Naive thymus-derived CD8-positive, alpha-beta T cell (primary cell): ENCODE measurements at regions of chr11 and their contacts with region 1.

Region 1: DNA sequence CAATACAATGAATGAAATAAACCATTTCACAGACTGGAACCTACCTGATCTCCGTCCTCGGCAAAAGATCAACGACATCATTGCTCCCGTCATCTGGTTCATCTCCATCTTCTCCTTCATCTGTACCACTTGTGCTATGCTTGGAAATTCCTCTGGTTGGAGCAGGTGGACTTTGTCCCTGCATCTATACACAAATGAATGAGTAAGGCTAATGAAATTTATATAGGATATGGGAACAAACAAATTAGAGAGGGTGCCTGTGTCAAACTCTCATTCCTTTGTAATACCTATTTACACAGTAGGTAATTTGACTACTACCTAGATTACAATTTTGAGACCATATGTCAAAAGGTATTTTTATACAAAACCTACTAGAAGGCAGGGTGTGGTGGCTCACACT is 59.4 kb downstream of the F2 start:
- DNase-seq: no peak
- ATAC-seq: no peak
- H3K4me3 Mint-ChIP-seq: no peak overlapping the region
- H3K27ac Mint-ChIP-seq: no peak overlapping the region
- H3K4me1 Mint-ChIP-seq: no peaks in the 10 kb centered on the region
- H3K27me3 Mint-ChIP-seq: no peaks in the 10 kb centered on the region

Region 2: DNA sequence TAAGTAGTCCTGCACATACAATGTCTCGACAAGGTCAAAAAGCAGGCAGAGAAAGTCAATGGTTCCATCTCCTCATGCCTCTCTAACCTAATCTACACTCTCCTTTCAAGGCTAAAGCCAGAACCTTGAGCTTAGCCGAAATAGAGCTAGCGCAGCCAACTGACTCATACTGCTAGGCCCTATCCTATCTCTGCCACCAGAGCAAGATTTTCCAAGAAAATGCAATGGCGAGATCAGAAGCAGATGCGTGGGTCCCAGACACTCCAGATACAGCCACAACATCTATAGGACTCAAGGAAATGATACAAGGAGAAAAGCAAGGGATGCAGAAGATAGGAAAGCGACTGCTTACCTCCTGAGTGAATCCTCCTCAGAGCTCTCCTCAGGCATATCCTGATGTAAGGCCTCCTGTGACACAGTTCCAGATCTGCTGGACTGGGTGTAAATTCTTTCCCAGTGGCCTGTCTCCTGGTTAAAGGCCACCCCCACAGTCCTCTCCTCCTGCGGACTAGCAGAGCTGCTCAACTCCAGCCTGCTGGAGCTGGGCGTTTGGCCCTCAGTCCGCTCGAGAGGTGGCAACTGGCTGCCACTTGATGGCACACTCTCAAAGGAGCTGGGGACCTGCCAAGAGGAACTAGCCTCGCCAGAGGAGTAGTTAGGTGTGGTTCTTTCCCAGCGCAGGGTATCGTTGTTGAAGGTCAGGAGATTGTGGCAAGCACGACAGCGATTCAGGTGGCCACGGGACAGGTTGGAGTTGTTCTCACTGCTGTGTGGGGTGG is 236.6 kb before region 1 on chr11:
- POLR2A ChIA-PET with region 1: interaction called, 12 read pairs
- DNase-seq: no peak
- ATAC-seq: no peak
- H3K4me3 Mint-ChIP-seq: no peak overlapping the region
- H3K27ac Mint-ChIP-seq: no peak overlapping the region
- H3K4me1 Mint-ChIP-seq: peaks cover 9 to 15% (median 14%) of the 10 kb centered on the region in 4 donors
- H3K27me3 Mint-ChIP-seq: no peaks in the 10 kb centered on the region